ENCODE measurements at regions of chr6 and their contacts with region 1.

Region 1: DNA sequence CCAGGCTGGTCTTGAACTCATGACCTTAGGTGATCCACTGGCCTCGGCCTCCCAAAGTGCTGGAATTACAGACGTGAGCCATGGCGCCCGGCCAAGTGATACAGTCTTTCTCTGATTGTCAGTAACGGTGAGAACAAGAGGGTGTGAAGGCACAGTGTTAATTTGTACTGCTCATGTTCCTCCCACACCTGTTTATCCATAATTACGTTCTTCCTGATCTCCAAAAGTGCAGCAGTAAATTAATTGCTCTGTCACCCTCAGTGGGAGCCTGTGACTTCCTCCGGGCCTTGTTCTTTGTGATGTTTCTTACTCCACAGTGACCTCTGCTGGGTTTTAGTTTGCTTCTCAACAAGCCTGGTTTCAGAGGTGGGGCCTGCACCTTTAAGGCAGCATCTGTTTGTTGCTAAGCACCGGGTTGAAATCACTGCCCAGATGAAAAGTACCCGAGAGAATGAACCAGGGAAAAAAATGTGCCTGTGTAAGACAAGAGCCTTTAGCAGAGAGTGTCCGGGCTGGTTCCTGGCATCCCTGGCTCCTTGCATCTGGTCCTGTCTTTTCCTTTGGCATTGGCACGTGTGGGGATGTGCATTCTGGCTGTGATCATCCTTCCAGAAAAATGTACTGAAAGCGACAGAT is 89.1 kb upstream of the CLDN20 start:
- DNase-seq: peak; percentile 60 to 81
- H3K4me3 ChIP-seq: no peak overlapping the region
- H3K27ac ChIP-seq: no peak overlapping the region
- H3K4me1 ChIP-seq: peaks cover 16% of the 10 kb centered on the region
- H3K27me3 ChIP-seq: no peaks in the 10 kb centered on the region
- CTCF ChIP-seq: peak; percentile 71

Region 2: GRCh38 chr6:154868143-154868594 is 306.5 kb before region 1 on chr6:
- CTCF ChIA-PET with region 1: no interaction called
- POLR2A ChIA-PET with region 1: no interaction called
- intact Hi-C with region 1: loop called (anchors 1 kb)
- DNase-seq: peak in 1 of 2 experiments; percentile 42
- H3K4me3 ChIP-seq: no peak overlapping the region
- H3K27ac ChIP-seq: no peak overlapping the region
- H3K4me1 ChIP-seq: no peaks in the 10 kb centered on the region
- H3K27me3 ChIP-seq: no peaks in the 10 kb centered on the region
- CTCF ChIP-seq: peak; percentile 78

Region 3: GRCh38 chr6:154878871-154879491 is 295.7 kb before region 1 on chr6:
- CTCF ChIA-PET with region 1: no interaction called
- POLR2A ChIA-PET with region 1: no interaction called
- intact Hi-C with region 1: no loop called
- DNase-seq: no peak
- H3K4me3 ChIP-seq: no peak overlapping the region
- H3K27ac ChIP-seq: no peak overlapping the region
- H3K4me1 ChIP-seq: no peaks in the 10 kb centered on the region
- H3K27me3 ChIP-seq: no peaks in the 10 kb centered on the region
- CTCF ChIP-seq: no peak

Region 4: GRCh38 chr6:154969796-154970195 is 204.9 kb before region 1 on chr6:
- CTCF ChIA-PET with region 1: no interaction called
- POLR2A ChIA-PET with region 1: no interaction called
- intact Hi-C with region 1: no loop called
- DNase-seq: no peak
- H3K4me3 ChIP-seq: no peak overlapping the region
- H3K27ac ChIP-seq: no peak overlapping the region
- H3K4me1 ChIP-seq: no peaks in the 10 kb centered on the region
- H3K27me3 ChIP-seq: no peaks in the 10 kb centered on the region
- CTCF ChIP-seq: no peak

Region 5: DNA sequence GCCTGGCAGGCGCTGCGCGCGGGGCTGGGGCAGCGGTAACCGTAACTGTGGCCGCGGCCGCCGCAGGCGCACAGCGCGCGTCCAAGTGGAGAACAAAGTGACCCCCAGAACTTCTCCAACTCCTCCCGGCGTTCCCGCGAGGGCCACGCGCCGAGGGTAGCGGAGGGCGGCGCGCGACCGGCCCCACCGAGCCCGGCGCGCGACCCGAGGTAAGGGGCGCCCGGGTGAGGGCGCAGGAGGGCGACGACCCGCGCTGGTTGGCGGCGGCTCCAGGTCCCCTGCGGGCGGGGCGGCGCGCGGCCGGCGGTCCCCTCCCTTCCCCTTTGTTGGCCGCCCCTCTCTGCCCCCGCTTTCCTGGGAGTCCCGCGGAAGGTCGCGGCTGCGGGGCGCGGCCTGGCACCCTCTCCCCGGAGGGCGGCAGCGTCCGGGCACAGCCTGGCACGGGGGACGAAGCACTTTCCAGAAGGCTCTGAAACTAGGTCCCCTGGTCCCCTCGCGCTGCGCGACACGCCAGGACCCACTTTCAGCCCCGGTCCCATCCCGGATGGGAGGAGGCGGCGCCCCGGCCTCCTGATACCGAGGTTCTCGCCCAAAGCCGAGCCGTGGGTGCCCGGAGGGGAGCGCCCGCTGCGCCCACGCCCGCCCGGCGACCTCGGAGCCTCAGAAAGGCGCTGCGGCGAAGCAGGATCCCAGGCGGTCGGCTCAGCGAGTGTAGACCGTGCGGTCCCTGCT is 179.2 kb before region 1 on chr6 and contains the start of gene TIAM2:
- CTCF ChIA-PET with region 1: interaction called, 6 read pairs
- POLR2A ChIA-PET with region 1: no interaction called
- intact Hi-C with region 1: loop called (anchors 2 kb)
- DNase-seq: peak in 1 of 2 experiments; percentile 31
- H3K4me3 ChIP-seq: peak within 1 kb of the TSS; percentile 59
- H3K27ac ChIP-seq: no peak within 1 kb of the TSS
- H3K4me1 ChIP-seq: peaks cover 17% of the 10 kb centered on the region
- H3K27me3 ChIP-seq: peaks cover 19% of the 10 kb centered on the region
- CTCF ChIP-seq: no peak
- total RNA-seq, gene TIAM2: 11.4 and 14.8 TPM in 2 replicates

Region 6: DNA sequence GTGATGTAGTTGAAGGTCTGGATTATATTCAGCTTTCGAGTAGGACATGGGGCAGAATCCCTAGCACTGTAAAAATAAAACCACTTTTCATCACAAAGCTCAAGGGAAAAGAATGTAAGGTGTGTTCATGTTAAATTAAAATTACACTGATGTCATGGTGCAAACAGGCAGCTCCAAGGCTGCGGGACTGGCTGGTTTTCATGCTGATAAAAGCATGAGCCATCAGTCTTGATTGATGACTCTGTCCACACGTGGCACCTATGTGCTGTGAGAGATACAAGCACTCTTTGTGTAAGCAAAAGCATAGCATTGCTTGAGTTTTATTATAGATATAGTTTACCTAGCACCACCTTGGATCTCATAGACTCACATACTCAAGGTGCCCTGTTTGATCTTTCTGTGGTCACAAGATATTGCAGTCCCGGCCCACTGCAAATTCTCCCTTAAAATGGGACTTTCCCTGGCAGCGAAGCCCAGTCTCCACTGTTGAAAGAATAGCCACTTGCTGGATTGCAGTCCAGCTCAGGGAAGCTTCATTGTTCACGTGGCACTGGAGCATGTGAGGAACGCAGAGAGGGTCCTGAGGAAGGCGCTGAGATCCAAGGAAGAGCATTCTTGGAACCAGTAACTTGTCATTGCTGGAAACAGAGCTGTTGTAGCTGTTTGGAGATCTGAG is 89.0 kb before region 1 on chr6:
- CTCF ChIA-PET with region 1: no interaction called
- POLR2A ChIA-PET with region 1: no interaction called
- intact Hi-C with region 1: loop called (anchors 5 kb)
- DNase-seq: peak; percentile 59 to 91
- H3K4me3 ChIP-seq: no peak overlapping the region
- H3K27ac ChIP-seq: peak overlapping the region; percentile 56
- H3K4me1 ChIP-seq: peaks cover 18% of the 10 kb centered on the region
- H3K27me3 ChIP-seq: no peaks in the 10 kb centered on the region
- CTCF ChIP-seq: no peak

Region 7: DNA sequence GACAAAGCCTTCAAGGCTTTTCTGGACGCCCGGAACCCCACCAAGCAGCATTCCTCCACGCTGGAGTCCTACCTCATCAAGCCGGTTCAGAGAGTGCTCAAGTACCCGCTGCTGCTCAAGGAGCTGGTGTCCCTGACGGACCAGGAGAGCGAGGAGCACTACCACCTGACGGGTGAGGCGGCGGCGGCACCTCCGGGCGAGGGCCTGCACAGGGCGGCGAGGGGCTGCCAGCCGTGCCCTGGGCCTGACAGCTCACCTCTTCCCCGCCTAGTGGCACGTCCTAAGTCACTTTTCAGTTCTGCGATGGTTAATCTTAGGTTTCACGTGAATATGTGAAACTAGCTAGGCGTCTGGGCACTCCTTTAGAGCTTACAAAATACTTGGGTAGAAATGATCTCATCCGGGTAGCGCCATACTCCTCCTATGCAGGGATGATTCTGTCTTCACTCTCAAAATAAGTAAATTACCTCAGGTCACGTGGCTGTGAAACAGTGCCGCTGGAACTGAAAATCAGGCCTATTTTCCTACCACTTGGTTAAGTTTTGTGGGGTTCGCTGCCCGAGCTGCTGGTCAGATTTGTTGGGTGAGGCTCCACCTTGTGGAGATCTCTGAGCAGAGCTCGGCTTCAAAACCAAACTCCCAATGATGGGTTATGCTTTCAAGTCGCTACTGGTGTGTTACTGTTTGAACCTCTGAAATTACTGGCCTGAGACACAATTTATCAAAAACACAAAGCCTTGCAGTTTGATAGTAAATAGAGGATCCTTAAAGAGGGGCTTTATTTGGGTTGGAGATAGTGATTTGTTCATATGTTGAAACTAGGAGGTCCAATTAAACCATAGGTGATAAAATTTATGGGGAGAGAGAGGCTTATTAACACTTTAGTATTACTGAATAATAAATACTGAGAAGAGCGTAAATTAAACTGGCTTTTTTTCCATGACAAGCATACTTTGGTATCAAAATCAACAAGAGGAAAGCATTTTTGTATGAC is 73.6 kb after region 1 on chr6:
- CTCF ChIA-PET with region 1: interaction called, 13 read pairs
- POLR2A ChIA-PET with region 1: interaction called, 4 read pairs
- intact Hi-C with region 1: loop called (anchors 1 kb)
- DNase-seq: peak; percentile 61 to 81
- H3K4me3 ChIP-seq: peak overlapping the region; percentile 54
- H3K27ac ChIP-seq: peak overlapping the region; percentile 96
- H3K4me1 ChIP-seq: peaks cover 31% of the 10 kb centered on the region
- H3K27me3 ChIP-seq: no peaks in the 10 kb centered on the region
- CTCF ChIP-seq: peak; percentile 82

Region 8: DNA sequence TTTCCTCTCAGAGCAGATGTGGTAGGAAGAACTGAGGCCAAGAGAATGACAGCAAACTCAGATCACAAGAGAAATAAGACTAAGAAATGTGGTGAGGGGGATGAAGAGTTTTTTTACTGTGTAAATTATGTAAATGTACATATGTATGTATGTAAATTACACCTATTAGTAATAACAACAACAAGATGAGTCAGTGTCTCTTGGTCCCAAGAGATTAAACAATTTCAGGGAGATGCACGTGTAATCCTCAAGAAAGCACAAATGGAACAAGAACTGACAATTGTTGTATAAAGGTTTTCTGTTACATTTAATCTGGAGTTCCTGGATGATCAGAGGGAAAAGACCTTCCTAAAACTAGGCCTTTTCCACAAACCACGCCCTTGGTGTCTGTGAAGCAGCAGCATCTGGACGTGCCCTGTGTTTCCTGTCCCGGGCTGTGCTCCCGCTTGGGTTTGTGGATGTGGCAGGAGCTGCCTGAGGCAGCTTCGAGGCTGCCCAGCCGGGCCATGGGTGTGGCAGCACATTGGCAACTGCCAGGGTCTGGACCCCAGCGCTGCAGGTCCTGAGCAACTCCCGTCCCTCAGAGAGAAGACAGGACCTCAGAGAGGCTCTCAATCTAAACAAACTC is 90.1 kb after region 1 on chr6:
- CTCF ChIA-PET with region 1: no interaction called
- POLR2A ChIA-PET with region 1: no interaction called
- intact Hi-C with region 1: loop called (anchors 5 kb)
- DNase-seq: no peak
- H3K4me3 ChIP-seq: no peak overlapping the region
- H3K27ac ChIP-seq: no peak overlapping the region
- H3K4me1 ChIP-seq: no peaks in the 10 kb centered on the region
- H3K27me3 ChIP-seq: no peaks in the 10 kb centered on the region
- CTCF ChIP-seq: no peak

Measured in PC-9 (cell line).